Astrocyte of the cerebellum (primary cell): ENCODE measurements at regions of chr1 and their contacts with region 1.

Region 1: GRCh38 chr1:30034627-30035521 is 688.5 kb downstream of the MATN1 start:
- DNase-seq: no peak
- H3K4me3 ChIP-seq: no peak overlapping the region
- CTCF ChIP-seq: no peak

Region 2: GRCh38 chr1:30083800-30084464 is 49.1 kb after region 1 on chr1:
- in situ Hi-C with region 1: loop called (anchors 5 kb)
- DNase-seq: peak; percentile 47
- H3K4me3 ChIP-seq: no peak overlapping the region
- CTCF ChIP-seq: no peak

Region 3: GRCh38 chr1:30120245-30121000 is 85.5 kb after region 1 on chr1:
- in situ Hi-C with region 1: no loop called
- DNase-seq: no peak
- H3K4me3 ChIP-seq: no peak overlapping the region
- CTCF ChIP-seq: no peak